ENCODE measurements at regions of chr9 and their contacts with region 1.

Region 1: GRCh38 chr9:30932226-30932625 is 1452.2 kb upstream of the ACO1 start:
- ATAC-seq: peak in 2 of 8 experiments; percentile 68 to 80
- H3K4me3 ChIP-seq: no peak overlapping the region
- H3K27ac ChIP-seq: no peak overlapping the region
- H3K4me1 ChIP-seq: peaks cover 0 to 5% of the 10 kb centered on the region in 2 donors

Region 2: GRCh38 chr9:30815585-30815984 is 116.6 kb before region 1 on chr9:
- in situ Hi-C with region 1: no loop called
- ATAC-seq: peak in 1 of 8 experiments; percentile 26
- H3K4me3 ChIP-seq: no peak overlapping the region
- H3K27ac ChIP-seq: no peak overlapping the region
- H3K4me1 ChIP-seq: no peaks in the 10 kb centered on the region

Region 3: DNA sequence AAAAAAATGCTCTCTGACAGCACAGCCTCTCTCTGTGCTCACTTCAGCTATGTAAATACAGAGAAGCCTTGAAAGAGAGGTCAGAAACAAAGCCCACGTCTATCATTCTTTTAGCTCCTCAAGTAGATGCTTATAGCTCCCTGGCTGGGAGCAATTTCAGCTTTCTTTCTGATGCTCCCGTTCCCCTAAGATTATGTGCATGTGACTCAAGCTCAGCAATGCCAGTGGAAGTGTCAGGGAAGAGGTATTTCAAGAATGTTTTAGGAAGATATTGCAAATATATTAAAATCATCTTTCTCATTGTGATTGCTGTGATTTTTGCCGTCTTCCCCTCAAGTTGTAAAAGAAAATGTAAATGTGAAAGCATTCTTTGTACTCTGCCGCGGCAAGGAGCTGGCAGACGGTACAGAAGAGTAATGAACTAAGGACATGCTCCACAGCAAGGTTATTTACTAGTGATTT is 98.5 kb after region 1 on chr9:
- in situ Hi-C with region 1: loop called in 1 of 9 experiments (anchors 25 kb)
- ATAC-seq: peak in 6 of 8 experiments; percentile 64 to 92 (median 77)
- H3K4me3 ChIP-seq: peak overlapping the region in 1 of 5 donors; percentile 16
- H3K27ac ChIP-seq: peak overlapping the region in 1 of 2 donors; percentile 19
- H3K4me1 ChIP-seq: peaks cover 11 to 42% of the 10 kb centered on the region in 2 donors

Measured in motor neuron (in vitro differentiated cells).